Dorsolateral prefrontal cortex (tissue), 120 donors: ENCODE measurements at regions of chrX and their contacts with region 1.

Region 1: GRCh38 chrX:130902783-130903613 is at the start of gene ENOX2:
- DNase-seq: peak; percentile 82 to 96 (median 94)
- H3K4me3 ChIP-seq: peak within 1 kb of the TSS; percentile 45 to 78 (median 63)
- H3K27ac ChIP-seq: peak within 1 kb of the TSS in 56 of 59 donors; percentile 44 to 94 (median 82)
- H3K27me3 ChIP-seq: peaks cover 0 to 61% (median 17%) of the 10 kb centered on the region in 45 donors
- CTCF ChIP-seq: peak in 22 of 56 donors; percentile 4 to 46 (median 20)
- total RNA-seq, gene ENOX2: 8.6 to 39.3 (median 15.9) TPM

Region 2: GRCh38 chrX:130144509-130144908 is 758.5 kb before region 1 on chrX:
- intact Hi-C with region 1: no loop called
- DNase-seq: no peak
- H3K4me3 ChIP-seq: no peak overlapping the region
- H3K27ac ChIP-seq: no peak overlapping the region
- H3K27me3 ChIP-seq: peaks cover 0 to 42% (median 12%) of the 10 kb centered on the region in 45 donors
- CTCF ChIP-seq: peak in 8 of 56 donors; percentile 8 to 33 (median 17)

Region 3: DNA sequence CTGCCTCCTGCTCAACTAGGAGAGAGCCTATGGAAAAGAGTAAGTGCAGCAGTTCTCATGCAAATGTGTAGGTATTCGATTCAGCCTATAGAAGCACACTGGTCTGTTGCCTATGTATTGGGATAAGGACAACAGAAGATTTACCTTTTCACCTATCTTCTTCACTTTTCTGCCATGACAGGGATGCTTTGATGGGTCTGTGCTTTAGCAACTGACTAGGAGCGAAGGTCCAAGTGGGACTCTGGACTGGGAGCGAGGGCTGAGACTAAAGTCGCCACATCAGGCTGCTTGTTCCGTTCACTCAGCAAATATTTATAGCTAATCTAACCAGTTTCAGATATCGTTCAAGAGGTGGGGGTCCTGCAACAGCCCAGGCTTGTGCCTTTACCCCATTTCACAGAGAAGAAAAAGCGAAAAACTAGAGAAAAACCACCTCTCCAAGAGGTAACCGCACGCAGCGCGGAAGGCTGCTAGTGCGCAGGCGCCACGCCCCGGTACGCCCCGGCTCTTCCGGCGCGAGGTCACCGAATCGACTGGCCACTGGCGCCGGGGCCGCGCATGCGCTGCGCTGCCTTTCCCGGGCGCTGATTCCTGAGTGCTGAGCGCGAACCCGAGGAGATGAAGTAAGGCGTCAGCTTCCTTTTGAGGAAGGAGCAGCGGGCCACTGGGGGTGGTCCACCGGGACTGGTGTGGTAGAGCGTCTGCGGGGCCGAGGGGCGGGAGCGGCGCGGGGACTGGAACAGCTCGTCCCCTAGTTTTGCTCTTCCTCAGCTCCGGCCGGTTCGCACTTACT is 501.4 kb before region 1 on chrX and contains the start of gene RBMX2:
- intact Hi-C with region 1: loop called (anchors 5 kb)
- DNase-seq: peak; percentile 49 to 81 (median 64)
- H3K4me3 ChIP-seq: peak within 1 kb of the TSS; percentile 44 to 84 (median 69)
- H3K27ac ChIP-seq: peak within 1 kb of the TSS in 49 of 59 donors; percentile 2 to 89 (median 66)
- H3K27me3 ChIP-seq: peaks cover 0 to 49% (median 16%) of the 10 kb centered on the region in 45 donors
- CTCF ChIP-seq: peak in 17 of 56 donors; percentile 6 to 42 (median 18)
- total RNA-seq, gene RBMX2: 16.6 to 38.3 (median 24.8) TPM

Region 4: DNA sequence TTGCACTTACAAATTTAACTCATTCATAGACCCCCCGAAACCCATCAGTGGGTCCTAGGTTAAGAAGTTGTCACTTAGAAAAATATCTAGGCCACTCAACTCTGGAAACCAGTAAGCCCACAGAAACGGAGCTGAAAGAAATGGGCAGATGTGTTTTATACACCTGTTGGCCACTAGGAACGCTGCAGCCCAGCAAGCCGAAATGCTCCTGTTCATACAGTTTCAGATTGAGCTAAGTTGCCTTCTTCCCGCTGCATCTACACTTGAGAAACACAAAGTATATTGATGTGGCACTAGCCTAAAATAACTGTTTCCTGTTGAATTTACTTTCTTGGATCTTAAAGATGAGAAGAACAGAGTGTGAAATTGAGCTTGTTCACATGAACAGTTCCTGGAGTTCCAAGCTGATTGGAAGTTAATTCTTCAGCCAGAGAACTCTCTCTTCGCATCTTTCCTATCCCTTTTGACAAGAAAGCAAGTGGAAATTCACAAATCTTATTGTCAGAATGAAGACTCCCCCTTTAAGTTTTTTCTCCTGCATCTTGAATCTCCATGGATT is 327.1 kb before region 1 on chrX:
- intact Hi-C with region 1: loop called in 1 of 2 experiments (anchors 5 kb)
- DNase-seq: peak in 6 of 10 donors; percentile 16 to 48 (median 36)
- H3K4me3 ChIP-seq: peak overlapping the region in 2 of 59 donors; percentile 6 to 8
- H3K27ac ChIP-seq: peak overlapping the region in 1 of 59 donors; percentile 23
- H3K27me3 ChIP-seq: peaks cover 0 to 60% (median 18%) of the 10 kb centered on the region in 45 donors
- CTCF ChIP-seq: peak; percentile 38 to 79 (median 64)

Region 5: GRCh38 chrX:130772105-130772775 is 130.8 kb before region 1 on chrX:
- intact Hi-C with region 1: no loop called
- DNase-seq: no peak
- H3K4me3 ChIP-seq: no peak overlapping the region
- H3K27ac ChIP-seq: no peak overlapping the region
- H3K27me3 ChIP-seq: peaks cover 0 to 70% (median 10%) of the 10 kb centered on the region in 45 donors
- CTCF ChIP-seq: no peak